Right ventricle myocardium superior (tissue), 1 donor: ENCODE measurements at regions of chr6 and their contacts with region 1.

Region 1: DNA sequence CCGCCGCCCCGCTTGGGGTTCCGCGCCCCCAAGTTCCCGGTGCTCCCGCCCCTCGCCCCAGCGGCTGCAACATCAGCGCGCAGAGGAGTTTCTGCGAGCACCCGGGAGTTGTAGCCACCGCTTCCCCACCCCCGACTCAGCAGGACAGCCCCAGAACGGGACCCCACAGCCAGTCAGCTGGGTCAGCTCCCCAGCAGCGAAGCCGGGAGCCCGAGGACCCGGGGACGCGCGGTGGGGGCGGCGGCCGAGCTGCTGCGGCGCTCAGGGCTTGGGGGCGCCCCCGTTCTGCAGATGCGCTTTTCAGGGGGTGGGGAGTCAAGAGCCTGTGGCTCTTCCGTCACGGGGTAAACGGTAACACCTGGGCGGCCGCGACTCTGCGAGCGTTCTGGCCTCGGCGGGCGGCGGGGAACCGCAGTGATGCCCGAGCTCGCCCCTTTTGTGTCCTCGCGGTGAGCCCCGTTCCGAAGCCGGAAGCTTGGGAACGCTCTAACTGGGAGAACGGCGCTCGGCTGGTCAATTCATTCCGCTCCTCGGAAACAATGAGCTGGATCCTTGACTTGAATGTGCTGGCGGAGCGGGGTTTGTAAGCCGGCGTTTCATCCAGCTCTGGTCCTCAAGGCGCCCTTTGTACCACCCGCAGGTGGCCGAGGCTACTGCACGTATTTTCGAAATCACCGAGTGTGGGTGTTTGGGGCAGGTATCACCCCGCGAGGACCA is 774 bp downstream of the PLEKHG1 start:
- DNase-seq: peak; percentile 73
- ATAC-seq: peak; percentile 64

Region 2: DNA sequence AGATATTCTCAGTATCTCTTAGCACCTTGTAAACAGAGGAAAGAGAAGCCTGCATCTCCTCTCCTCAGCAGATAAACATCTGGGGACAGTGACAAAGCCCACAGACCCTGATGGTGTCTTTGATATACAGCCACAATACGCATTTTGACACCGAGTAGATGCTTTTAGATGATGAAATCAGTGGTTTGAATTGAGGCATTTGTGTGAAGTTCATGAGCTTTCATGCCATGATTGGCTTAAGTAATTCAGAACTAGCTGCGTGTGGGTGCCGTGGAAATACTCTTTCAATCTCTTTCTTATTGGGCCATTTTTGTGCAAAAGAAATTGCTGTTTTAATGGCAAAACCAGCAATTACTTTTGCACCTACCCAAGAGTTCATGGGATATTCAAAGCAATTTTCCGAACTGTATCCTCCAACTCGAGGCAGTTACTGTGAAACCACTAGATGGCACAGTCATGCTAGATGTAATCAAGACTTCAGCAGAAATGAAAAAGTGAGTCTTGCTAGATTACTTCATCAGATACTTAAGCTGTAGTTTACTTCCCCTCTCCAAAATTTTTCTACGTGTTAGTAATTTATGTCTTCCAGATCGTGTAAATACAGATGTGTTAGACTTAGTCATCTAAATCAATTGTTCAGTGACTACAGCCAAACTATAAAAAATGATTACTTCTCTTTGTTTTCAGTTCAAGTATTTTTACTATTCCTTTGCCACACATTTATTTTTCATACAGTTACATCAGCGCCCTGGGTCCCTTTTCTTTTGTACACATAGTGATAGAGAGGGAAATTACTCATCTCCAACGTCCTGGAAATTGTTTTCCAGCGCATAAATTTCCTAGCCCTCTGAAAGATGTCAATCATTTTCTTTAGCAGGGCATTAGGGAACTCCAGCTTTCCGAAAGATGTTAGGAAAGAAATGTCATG is 182.3 kb before region 1 on chr6:
- intact Hi-C with region 1: loop called (anchors 5 kb)
- DNase-seq: no peak
- ATAC-seq: peak; percentile 92

Region 3: GRCh38 chr6:150667977-150668716 is 67.7 kb after region 1 on chr6:
- intact Hi-C with region 1: loop called (anchors 5 kb)
- DNase-seq: peak; percentile 92
- ATAC-seq: peak; percentile 97

Region 4: GRCh38 chr6:150813319-150813992 is 213.0 kb after region 1 on chr6:
- intact Hi-C with region 1: loop called (anchors 10 kb)
- DNase-seq: no peak
- ATAC-seq: peak; percentile 34